ENCODE measurements at regions of chr3 and their contacts with region 1.

Region 1: GRCh38 chr3:70856414-70857162 is 544.1 kb upstream of the MDFIC2 start:
- DNase-seq: peak; percentile 10
- H3K4me3 Mint-ChIP-seq: no peak overlapping the region
- H3K27ac Mint-ChIP-seq: no peak overlapping the region
- H3K4me1 Mint-ChIP-seq: peaks cover 28% of the 10 kb centered on the region
- H3K27me3 Mint-ChIP-seq: peaks cover 23% of the 10 kb centered on the region

Region 2: GRCh38 chr3:70603103-70603502 is 253.5 kb before region 1 on chr3:
- CTCF ChIA-PET with region 1: no interaction called
- intact Hi-C with region 1: loop called (anchors 5 kb)
- DNase-seq: peak; percentile 55
- H3K4me3 Mint-ChIP-seq: no peak overlapping the region
- H3K27ac Mint-ChIP-seq: peak overlapping the region; percentile 28
- H3K4me1 Mint-ChIP-seq: peaks cover 10% of the 10 kb centered on the region
- H3K27me3 Mint-ChIP-seq: peaks cover 13% of the 10 kb centered on the region

Region 3: GRCh38 chr3:70982700-70983140 is 126.1 kb after region 1 on chr3:
- CTCF ChIA-PET with region 1: no interaction called
- intact Hi-C with region 1: loop called (anchors 2 kb)
- DNase-seq: peak; percentile 66
- H3K4me3 Mint-ChIP-seq: no peak overlapping the region
- H3K27ac Mint-ChIP-seq: peak overlapping the region; percentile 96
- H3K4me1 Mint-ChIP-seq: peaks cover 74% of the 10 kb centered on the region
- H3K27me3 Mint-ChIP-seq: no peaks in the 10 kb centered on the region